ENCODE measurements at regions of chr14 and their contacts with region 1.

Region 1: GRCh38 chr14:20714593-20715250 is 26.2 kb downstream of the ANG start:
- DNase-seq: peak; percentile 78 to 93 (median 88)
- ATAC-seq: peak; percentile 85
- H3K4me3 ChIP-seq: no peak overlapping the region
- H3K27ac ChIP-seq: peak overlapping the region; percentile 27 to 80 (median 50)
- H3K4me1 ChIP-seq: peaks cover 41% of the 10 kb centered on the region
- H3K27me3 ChIP-seq: no peaks in the 10 kb centered on the region
- CTCF ChIP-seq: no peak
- POLR2A ChIP-seq: peak in 1 of 3 donors; percentile 25

Region 2: GRCh38 chr14:20499108-20499507 is 215.6 kb before region 1 on chr14:
- intact Hi-C with region 1: no loop called
- DNase-seq: no peak
- ATAC-seq: no peak
- H3K4me3 ChIP-seq: no peak overlapping the region
- H3K27ac ChIP-seq: no peak overlapping the region
- H3K4me1 ChIP-seq: no peaks in the 10 kb centered on the region
- H3K27me3 ChIP-seq: no peaks in the 10 kb centered on the region
- CTCF ChIP-seq: no peak
- POLR2A ChIP-seq: no peak

Region 3: DNA sequence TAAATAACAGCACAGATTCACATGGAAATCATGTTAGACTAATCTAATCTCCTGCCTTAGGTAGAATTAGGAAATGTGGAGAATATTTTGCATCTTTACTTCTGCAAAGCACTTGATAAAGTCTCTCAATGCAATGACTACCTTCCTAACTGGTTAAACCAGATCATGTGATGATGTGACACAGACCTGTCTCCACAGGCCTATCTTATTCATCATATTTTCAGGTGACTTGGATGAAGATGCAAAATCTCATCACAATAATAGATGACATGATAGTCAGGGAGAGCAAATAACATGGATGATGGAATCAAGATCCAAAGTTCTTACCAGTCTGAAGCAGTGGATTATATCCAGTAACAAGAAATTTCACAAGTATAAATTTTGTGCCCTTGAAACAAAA is 126.4 kb after region 1 on chr14:
- intact Hi-C with region 1: loop called (anchors 5 kb)
- DNase-seq: no peak
- ATAC-seq: no peak
- H3K4me3 ChIP-seq: no peak overlapping the region
- H3K27ac ChIP-seq: no peak overlapping the region
- H3K4me1 ChIP-seq: peaks cover 11% of the 10 kb centered on the region
- H3K27me3 ChIP-seq: no peaks in the 10 kb centered on the region
- CTCF ChIP-seq: no peak
- POLR2A ChIP-seq: no peak

Region 4: GRCh38 chr14:20855652-20856291 is 141.1 kb after region 1 on chr14:
- intact Hi-C with region 1: no loop called
- DNase-seq: peak; percentile 65 to 83 (median 76)
- ATAC-seq: peak; percentile 96
- H3K4me3 ChIP-seq: no peak overlapping the region
- H3K27ac ChIP-seq: no peak overlapping the region
- H3K4me1 ChIP-seq: peaks cover 11% of the 10 kb centered on the region
- H3K27me3 ChIP-seq: no peaks in the 10 kb centered on the region
- CTCF ChIP-seq: peak; percentile 61 to 95 (median 92)
- POLR2A ChIP-seq: no peak

Region 5: GRCh38 chr14:21802441-21802840 is 1087.7 kb after region 1 on chr14:
- intact Hi-C with region 1: no loop called
- DNase-seq: no peak
- ATAC-seq: no peak
- H3K4me3 ChIP-seq: no peak overlapping the region
- H3K27ac ChIP-seq: no peak overlapping the region
- H3K4me1 ChIP-seq: no peaks in the 10 kb centered on the region
- H3K27me3 ChIP-seq: no peaks in the 10 kb centered on the region
- CTCF ChIP-seq: no peak
- POLR2A ChIP-seq: no peak